ENCODE measurements at regions of chr15 and their contacts with region 1.

Region 1: DNA sequence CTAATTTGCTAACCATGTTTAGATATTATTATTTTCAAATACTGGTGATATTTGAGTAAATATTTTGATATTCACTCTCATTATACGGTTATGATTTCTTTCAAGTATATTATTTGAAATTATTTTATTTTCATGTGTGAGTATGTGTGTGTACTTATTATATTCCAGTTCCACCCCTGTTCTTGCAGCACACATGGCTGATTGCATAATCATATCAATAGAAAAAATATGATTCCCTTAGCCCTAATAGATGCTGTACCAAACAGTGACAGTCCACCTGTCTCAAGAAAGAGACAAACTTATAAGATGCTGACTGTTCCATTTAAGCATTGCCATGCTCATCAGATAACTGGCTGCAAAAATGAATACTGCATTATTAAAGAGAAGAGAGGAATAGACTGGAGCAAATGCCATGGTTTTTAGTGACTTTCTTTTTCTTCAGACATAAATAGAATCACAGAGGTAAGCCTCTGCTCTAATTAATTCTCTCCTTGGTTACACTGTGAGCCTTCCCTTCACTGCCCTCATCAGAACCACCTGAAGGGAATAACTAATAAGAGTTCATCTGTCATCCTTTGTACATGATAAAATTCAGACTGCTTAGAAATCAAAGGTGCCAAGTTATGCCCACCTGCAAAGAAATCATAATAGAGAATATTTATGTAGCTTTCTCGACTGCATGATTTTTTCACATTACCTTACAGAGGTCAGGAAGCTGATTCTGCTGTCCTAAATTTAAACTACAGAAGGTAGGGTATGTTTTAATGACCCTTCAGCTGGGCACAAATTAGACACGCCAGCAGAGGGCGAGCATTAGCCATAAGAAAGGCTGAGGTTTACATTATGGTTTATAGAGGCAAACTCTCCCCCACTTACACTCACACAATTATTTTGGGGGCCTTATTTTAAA is 15.7 kb upstream of the UNC13C start:
- DNase-seq: peak; percentile 4 to 7
- ATAC-seq: peak in 1 of 8 donors; percentile 42
- H3K4me3 ChIP-seq: no peak overlapping the region
- H3K27ac ChIP-seq: no peak overlapping the region
- H3K4me1 ChIP-seq: no peaks in the 10 kb centered on the region
- H3K27me3 ChIP-seq: peaks cover 0 to 10% (median 0%) of the 10 kb centered on the region in 7 donors
- CTCF ChIP-seq: peak in 7 of 9 donors; percentile 31 to 55 (median 43)

Region 2: GRCh38 chr15:55108858-55109518 is 1146.4 kb after region 1 on chr15:
- intact Hi-C with region 1: loop called in 1 of 10 experiments (anchors 5 kb)
- DNase-seq: peak; percentile 53 to 60
- ATAC-seq: peak in 4 of 8 donors; percentile 38 to 57 (median 55)
- H3K4me3 ChIP-seq: no peak overlapping the region
- H3K27ac ChIP-seq: no peak overlapping the region
- H3K4me1 ChIP-seq: peaks cover 0 to 3% (median 0%) of the 10 kb centered on the region in 9 donors
- H3K27me3 ChIP-seq: no peaks in the 10 kb centered on the region
- CTCF ChIP-seq: peak in 8 of 9 donors; percentile 34 to 71 (median 68)

Region 3: GRCh38 chr15:55168329-55168974 is 1205.9 kb after region 1 on chr15:
- intact Hi-C with region 1: loop called in 1 of 10 experiments (anchors 10 kb)
- DNase-seq: peak; percentile 9 to 27
- ATAC-seq: peak in 2 of 8 donors; percentile 37 to 46
- H3K4me3 ChIP-seq: no peak overlapping the region
- H3K27ac ChIP-seq: no peak overlapping the region
- H3K4me1 ChIP-seq: no peaks in the 10 kb centered on the region
- H3K27me3 ChIP-seq: no peaks in the 10 kb centered on the region
- CTCF ChIP-seq: peak; percentile 20 to 83 (median 67)